ENCODE measurements at regions of chr12 and their contacts with region 1.

Region 1: DNA sequence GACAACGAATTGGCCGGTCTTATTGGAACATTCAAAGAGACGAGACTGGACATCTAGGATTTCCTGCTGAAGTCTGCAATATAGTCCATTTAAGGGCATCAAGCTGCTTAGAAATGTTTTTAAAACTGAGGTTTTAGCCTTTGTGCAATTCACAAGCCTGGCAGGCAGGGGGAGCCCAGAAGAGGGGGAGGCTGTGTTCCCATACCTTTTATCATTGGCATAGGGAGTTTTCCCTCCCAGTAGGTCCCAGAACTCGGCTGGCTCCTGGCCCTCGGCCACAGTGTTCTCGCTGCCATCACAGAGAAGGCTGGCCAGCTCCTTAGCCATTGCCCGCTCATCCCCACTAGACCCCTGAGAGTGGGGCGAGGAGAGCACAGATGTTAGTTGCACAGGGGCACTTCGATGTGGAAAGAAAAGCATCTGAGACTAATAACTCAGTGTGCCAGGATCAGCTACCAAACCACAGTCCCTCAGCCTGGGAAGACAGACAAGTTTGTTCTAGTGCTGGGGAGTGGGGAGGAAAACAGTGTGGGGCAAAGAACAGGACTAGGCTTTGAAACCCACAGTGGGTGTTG is 15.1 kb downstream of the AVIL start:
- DNase-seq: peak in 6 of 9 experiments; percentile 11 to 48 (median 40)
- ATAC-seq: peak; percentile 55
- H3K4me3 ChIP-seq: no peak overlapping the region
- H3K4me3 Mint-ChIP-seq: no peak overlapping the region
- H3K27ac ChIP-seq: no peak overlapping the region
- H3K27ac Mint-ChIP-seq: no peak overlapping the region
- H3K4me1 ChIP-seq: no peaks in the 10 kb centered on the region
- H3K4me1 Mint-ChIP-seq: no peaks in the 10 kb centered on the region
- H3K27me3 ChIP-seq: no peaks in the 10 kb centered on the region
- H3K27me3 Mint-ChIP-seq: no peaks in the 10 kb centered on the region
- CTCF ChIP-seq: peak; percentile 71

Region 2: GRCh38 chr12:56152318-56153033 is 1650.9 kb before region 1 on chr12 and contains the start of gene MYL6B:
- CTCF ChIA-PET with region 1: no interaction called
- POLR2A ChIA-PET with region 1: no interaction called
- intact Hi-C with region 1: no loop called
- DNase-seq: peak; percentile 80 to 96 (median 93)
- ATAC-seq: peak; percentile 90
- H3K4me3 ChIP-seq: peak within 1 kb of the TSS; percentile 65 to 95
- H3K4me3 Mint-ChIP-seq: peak within 1 kb of the TSS; percentile 90
- H3K27ac ChIP-seq: peak within 1 kb of the TSS; percentile 75 to 90
- H3K27ac Mint-ChIP-seq: peak within 1 kb of the TSS; percentile 99
- H3K4me1 ChIP-seq: peaks cover 30% of the 10 kb centered on the region
- H3K4me1 Mint-ChIP-seq: peaks cover 29% of the 10 kb centered on the region
- H3K27me3 ChIP-seq: no peaks in the 10 kb centered on the region
- H3K27me3 Mint-ChIP-seq: no peaks in the 10 kb centered on the region
- CTCF ChIP-seq: no peak
- total RNA-seq, gene MYL6B: 4.0 to 5.9 TPM

Region 3: GRCh38 chr12:57815177-57816000 is 12.0 kb after region 1 on chr12:
- CTCF ChIA-PET with region 1: interaction called, 29 read pairs
- POLR2A ChIA-PET with region 1: interaction called, 4 read pairs
- intact Hi-C with region 1: no loop called
- DNase-seq: peak in 1 of 9 experiments; percentile 30
- ATAC-seq: no peak
- H3K4me3 ChIP-seq: no peak overlapping the region
- H3K4me3 Mint-ChIP-seq: no peak overlapping the region
- H3K27ac ChIP-seq: no peak overlapping the region
- H3K27ac Mint-ChIP-seq: no peak overlapping the region
- H3K4me1 ChIP-seq: no peaks in the 10 kb centered on the region
- H3K4me1 Mint-ChIP-seq: no peaks in the 10 kb centered on the region
- H3K27me3 ChIP-seq: no peaks in the 10 kb centered on the region
- H3K27me3 Mint-ChIP-seq: no peaks in the 10 kb centered on the region
- CTCF ChIP-seq: no peak

Region 4: GRCh38 chr12:57836442-57837375 is 33.3 kb after region 1 on chr12:
- CTCF ChIA-PET with region 1: interaction called, 6 read pairs
- POLR2A ChIA-PET with region 1: no interaction called
- intact Hi-C with region 1: loop called in 1 of 2 experiments (anchors 5 kb)
- DNase-seq: peak in 5 of 9 experiments; percentile 42 to 73 (median 55)
- ATAC-seq: peak; percentile 26
- H3K4me3 ChIP-seq: peak overlapping the region in 1 of 2 experiments; percentile 32
- H3K4me3 Mint-ChIP-seq: peak overlapping the region; percentile 63
- H3K27ac ChIP-seq: peak overlapping the region; percentile 37 to 64
- H3K27ac Mint-ChIP-seq: peak overlapping the region; percentile 94
- H3K4me1 ChIP-seq: peaks cover 98% of the 10 kb centered on the region
- H3K4me1 Mint-ChIP-seq: peaks cover 93% of the 10 kb centered on the region
- H3K27me3 ChIP-seq: no peaks in the 10 kb centered on the region
- H3K27me3 Mint-ChIP-seq: no peaks in the 10 kb centered on the region
- CTCF ChIP-seq: no peak